ENCODE measurements at regions of chr7 and their contacts with region 1.

Region 1: GRCh38 chr7:125480762-125481161 is 551.1 kb upstream of the POT1 start:
- DNase-seq: no peak
- H3K4me3 ChIP-seq: no peak overlapping the region
- H3K27ac ChIP-seq: no peak overlapping the region
- H3K4me1 ChIP-seq: no peaks in the 10 kb centered on the region
- H3K27me3 ChIP-seq: no peaks in the 10 kb centered on the region
- CTCF ChIP-seq: no peak
- EP300 ChIP-seq: no peak
- RAD21 ChIP-seq: no peak

Region 2: GRCh38 chr7:125467996-125468854 is 12.5 kb before region 1 on chr7:
- CTCF ChIA-PET with region 1: interaction called, 10 read pairs
- POLR2A ChIA-PET with region 1: no interaction called
- DNase-seq: no peak
- H3K4me3 ChIP-seq: no peak overlapping the region
- H3K27ac ChIP-seq: no peak overlapping the region
- H3K4me1 ChIP-seq: no peaks in the 10 kb centered on the region; a peak in 2 of 4 replicates
- H3K27me3 ChIP-seq: no peaks in the 10 kb centered on the region
- CTCF ChIP-seq: no peak
- EP300 ChIP-seq: no peak
- RAD21 ChIP-seq: no peak